K562 (cell line): ENCODE measurements at regions of chr15 and their contacts with region 1.

Region 1: GRCh38 chr15:64460206-64460734 is at the start of gene ZNF609:
- DNase-seq: peak; percentile 95
- ATAC-seq: peak; percentile 73
- H3K4me3 ChIP-seq: peak within 1 kb of the TSS; percentile 55
- H3K27ac ChIP-seq: peak within 1 kb of the TSS; percentile 88
- H3K4me1 ChIP-seq: peaks cover 6 to 60% of the 10 kb centered on the region in 2 experiments; a peak in 4 of 5 replicates
- H3K27me3 ChIP-seq: no peaks in the 10 kb centered on the region
- CTCF ChIP-seq: no peak
- EP300 ChIP-seq: peak; percentile 62
- POLR2A ChIP-seq: peak; percentile 39; the same call in 1 of the 2 replicates
- RAD21 ChIP-seq: peak in 1 of 2 experiments; percentile 33; a peak in 1 of 4 replicates
- polyA plus RNA-seq, gene ZNF609: 3.0 to 7.6 TPM

Region 2: DNA sequence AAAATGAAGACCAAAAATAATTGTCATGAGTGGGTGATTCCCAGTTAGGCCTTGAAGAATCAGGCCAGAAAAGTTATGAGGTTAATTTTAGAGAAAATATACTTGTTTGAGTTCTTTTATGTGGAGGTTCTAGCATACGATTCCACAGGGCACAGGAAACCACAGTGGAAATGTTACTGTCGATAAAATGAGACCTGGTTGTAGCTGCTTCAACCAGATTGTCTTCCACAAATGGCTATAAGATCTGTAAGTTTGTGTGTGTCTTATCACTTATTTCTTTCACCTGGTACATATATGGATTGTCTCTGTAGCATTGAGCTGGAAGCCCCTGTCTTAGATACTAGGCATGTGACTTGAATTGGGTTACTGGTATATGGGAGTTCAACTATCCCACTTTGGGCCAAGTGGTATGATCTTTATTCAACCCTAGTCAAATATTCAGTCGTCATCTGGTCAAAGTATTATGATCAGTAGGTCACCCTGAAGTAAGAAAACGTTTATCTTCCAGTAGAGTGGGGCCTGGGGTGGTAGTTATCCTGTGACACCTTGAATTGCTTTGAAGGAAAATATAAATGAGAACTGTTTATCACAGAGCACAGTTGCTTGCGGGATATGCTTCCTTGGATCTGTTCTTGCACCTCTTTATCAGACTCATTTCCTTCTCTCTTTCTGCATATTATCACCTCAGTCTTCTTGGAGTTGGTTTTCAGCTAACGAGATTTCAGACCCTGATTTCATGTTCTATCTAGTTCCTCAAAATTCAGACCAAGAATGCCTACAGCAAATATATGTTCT is 21.4 kb before region 1 on chr15:
- CTCF ChIA-PET with region 1: no interaction called
- POLR2A ChIA-PET with region 1: interaction called, 5 read pairs
- in situ Hi-C with region 1: no loop called
- intact Hi-C with region 1: loop called (anchors 2 kb)
- DNase-seq: peak; percentile 41 to 84 (median 62)
- ATAC-seq: peak; percentile 87
- H3K4me3 ChIP-seq: no peak overlapping the region
- H3K27ac ChIP-seq: peak overlapping the region; percentile 51; the same call in 2 of the 3 replicates
- H3K4me1 ChIP-seq: peaks cover 8 to 20% of the 10 kb centered on the region in 2 experiments; a peak in 4 of 5 replicates
- H3K27me3 ChIP-seq: no peaks in the 10 kb centered on the region
- CTCF ChIP-seq: no peak
- EP300 ChIP-seq: peak; percentile 95
- POLR2A ChIP-seq: no peak
- RAD21 ChIP-seq: no peak; a peak in 1 of 4 replicates